HepG2 (cell line): ENCODE measurements at regions of chr6 and their contacts with region 1.

Region 1: DNA sequence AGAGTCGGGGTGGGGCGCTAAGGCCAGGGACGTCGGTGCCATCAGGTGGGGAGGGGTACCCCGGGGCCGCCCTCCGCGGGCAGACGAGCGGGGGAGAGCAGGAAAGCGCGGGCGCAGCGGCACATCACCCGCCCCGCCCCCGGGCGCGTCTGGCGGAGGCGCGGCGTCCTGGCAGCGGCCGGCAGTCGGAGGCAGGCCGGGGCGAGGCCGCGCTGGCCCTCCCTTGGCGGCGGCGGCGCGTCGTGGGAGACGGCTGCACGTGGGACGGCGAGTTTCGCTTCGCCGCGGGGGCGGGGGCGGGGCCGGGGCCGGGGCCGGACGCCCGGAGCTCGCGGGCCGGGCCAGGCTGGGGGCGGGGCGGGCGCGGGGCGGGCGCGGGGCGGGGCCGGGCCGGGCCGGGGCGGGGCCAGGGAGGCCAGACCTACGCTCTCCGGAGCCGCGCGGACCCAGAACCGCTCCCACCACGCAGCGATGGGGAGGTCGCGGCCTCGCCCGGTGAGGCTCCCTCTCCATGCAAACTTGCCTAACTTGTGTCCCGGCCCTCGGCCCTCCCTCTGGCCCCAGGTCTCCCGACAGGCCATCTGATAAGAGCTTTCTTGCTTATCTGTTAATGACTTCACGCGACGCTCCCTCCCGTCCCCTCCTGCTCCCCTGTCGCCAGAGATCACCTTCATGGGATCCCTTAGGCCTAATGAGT is 12.5 kb downstream of the ITPR3 start:
- DNase-seq: no peak
- ATAC-seq: peak; percentile 81
- H3K4me3 ChIP-seq: peak overlapping the region; percentile 58 to 84 (median 60)
- H3K27ac ChIP-seq: no peak overlapping the region
- H3K4me1 ChIP-seq: peaks cover 34% of the 10 kb centered on the region
- H3K27me3 ChIP-seq: no peaks in the 10 kb centered on the region
- CTCF ChIP-seq: no peak
- EP300 ChIP-seq: no peak
- POLR2A ChIP-seq: peak in 1 of 2 experiments; percentile 59; a peak in 2 of 4 replicates
- RAD21 ChIP-seq: no peak

Region 2: DNA sequence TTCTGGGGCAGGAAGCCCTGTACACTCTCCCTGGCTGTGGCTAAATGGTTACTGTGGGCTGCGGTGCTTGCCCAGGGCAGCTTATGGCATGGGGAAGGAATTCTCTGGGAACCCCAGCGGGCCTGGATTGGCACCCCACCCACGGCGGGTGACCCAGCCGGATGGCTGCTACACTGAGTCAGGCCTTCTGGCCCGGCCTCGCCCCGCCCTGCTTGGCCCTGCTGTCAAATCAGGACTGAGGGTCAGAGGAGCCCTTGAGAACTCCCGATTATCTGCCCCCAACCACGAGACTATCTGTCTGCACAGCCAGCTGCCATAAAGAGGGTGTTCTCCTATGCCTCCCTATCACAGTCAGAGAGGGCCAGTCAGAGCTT is 19.8 kb before region 1 on chr6:
- CTCF ChIA-PET with region 1: interaction called, 3 read pairs
- POLR2A ChIA-PET with region 1: no interaction called
- in situ Hi-C with region 1: no loop called
- intact Hi-C with region 1: loop called (anchors 1 kb)
- DNase-seq: no peak
- ATAC-seq: peak; percentile 24
- H3K4me3 ChIP-seq: peak overlapping the region in 1 of 3 experiments; percentile 29; a peak in 2 of 6 replicates
- H3K27ac ChIP-seq: peak overlapping the region; percentile 32
- H3K4me1 ChIP-seq: peaks cover 61% of the 10 kb centered on the region
- H3K27me3 ChIP-seq: no peaks in the 10 kb centered on the region; a peak in 1 of 5 replicates
- CTCF ChIP-seq: no peak
- EP300 ChIP-seq: no peak
- POLR2A ChIP-seq: no peak
- RAD21 ChIP-seq: no peak

Region 3: GRCh38 chr6:33700391-33701050 is 66.9 kb after region 1 on chr6:
- CTCF ChIA-PET with region 1: no interaction called
- POLR2A ChIA-PET with region 1: no interaction called
- in situ Hi-C with region 1: no loop called
- intact Hi-C with region 1: loop called (anchors 10 kb)
- DNase-seq: peak; percentile 58
- ATAC-seq: peak; percentile 68
- H3K4me3 ChIP-seq: no peak overlapping the region
- H3K27ac ChIP-seq: no peak overlapping the region
- H3K4me1 ChIP-seq: peaks cover 11% of the 10 kb centered on the region; the same call in 1 of the 2 replicates
- H3K27me3 ChIP-seq: no peaks in the 10 kb centered on the region
- CTCF ChIP-seq: peak; percentile 87
- EP300 ChIP-seq: no peak
- POLR2A ChIP-seq: no peak
- RAD21 ChIP-seq: 0 out of 2 replicates have a peak, but pooled peaks have one; percentile 19